OCI-LY7 (cell line): ENCODE measurements at regions of chr15 and their contacts with region 1.

Region 1: DNA sequence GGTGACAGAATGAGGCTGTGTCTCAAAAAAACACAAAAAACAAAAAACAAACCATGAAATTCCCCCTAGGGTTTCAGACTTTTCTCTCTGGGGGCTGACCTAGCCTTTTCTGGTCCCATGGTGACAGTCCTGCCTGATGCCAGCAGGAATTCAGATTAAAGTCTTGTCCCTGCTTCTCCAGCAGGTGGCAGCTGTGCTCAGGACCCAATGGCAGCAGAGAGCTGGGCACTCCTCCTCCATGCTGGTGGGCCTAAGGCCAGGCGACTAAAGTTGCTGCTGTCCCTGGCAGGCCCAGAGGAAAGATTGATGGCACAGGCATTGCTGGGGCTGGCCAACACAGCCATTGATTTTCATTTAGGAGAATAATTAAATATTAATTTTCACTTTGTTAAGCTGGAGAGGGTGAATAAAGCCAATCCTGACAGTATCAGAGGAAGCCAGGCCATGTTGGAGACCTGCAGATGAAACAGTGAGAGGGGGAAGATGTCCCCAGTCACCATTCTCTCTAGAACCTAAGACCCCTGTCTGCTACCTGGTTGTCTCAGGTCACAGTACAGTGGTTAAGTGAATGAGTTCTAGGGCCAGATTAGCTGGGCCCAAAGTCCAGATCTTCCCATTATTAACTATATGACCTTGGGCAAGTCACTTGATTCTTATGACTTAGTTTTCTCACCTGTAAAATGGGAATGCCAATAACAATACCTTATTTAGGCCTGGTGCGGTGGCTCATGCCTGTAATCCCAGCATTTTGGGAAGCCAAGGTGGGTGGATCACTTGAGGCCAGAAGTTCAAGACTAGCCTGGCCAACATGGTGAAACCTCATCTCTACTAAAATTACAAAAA is 7.1 kb downstream of the CELF6 start:
- DNase-seq: peak; percentile 69
- H3K4me3 ChIP-seq: no peak overlapping the region
- H3K27ac ChIP-seq: no peak overlapping the region
- H3K4me1 ChIP-seq: no peaks in the 10 kb centered on the region
- CTCF ChIP-seq: peak; percentile 83

Region 2: DNA sequence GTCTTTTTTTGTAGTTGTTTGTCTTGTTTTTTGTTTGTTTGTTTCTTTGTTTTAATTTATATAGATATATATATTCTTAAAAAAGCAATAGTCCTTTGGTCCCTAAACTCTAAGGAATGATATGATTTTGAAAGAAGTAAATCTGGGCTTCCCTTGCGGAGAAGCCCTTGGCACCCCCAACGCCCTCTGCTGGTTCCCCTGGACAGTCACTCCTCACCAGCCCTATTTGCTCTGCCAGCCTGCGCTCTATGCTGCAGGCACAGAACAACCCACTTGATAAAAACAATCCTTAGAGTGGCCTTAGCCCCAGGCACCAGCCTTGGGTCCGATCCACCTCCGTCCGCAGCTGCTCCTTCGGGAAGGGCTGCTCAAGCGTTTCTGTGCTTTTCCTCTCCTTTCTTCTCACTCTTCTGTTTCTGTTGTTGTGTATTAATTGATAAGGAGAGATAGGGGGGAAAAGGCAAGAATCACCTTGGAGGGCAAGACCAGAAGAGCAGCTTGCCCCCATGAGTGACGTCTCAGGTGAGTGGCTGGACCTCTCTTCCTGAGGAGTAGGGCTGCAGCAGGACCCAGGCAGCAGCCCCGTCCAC is 26.8 kb before region 1 on chr15:
- CTCF ChIA-PET with region 1: no interaction called
- POLR2A ChIA-PET with region 1: no interaction called
- intact Hi-C with region 1: no loop called
- DNase-seq: peak; percentile 57
- H3K4me3 ChIP-seq: no peak overlapping the region
- H3K27ac ChIP-seq: no peak overlapping the region
- H3K4me1 ChIP-seq: no peaks in the 10 kb centered on the region
- CTCF ChIP-seq: peak; percentile 83

Region 3: DNA sequence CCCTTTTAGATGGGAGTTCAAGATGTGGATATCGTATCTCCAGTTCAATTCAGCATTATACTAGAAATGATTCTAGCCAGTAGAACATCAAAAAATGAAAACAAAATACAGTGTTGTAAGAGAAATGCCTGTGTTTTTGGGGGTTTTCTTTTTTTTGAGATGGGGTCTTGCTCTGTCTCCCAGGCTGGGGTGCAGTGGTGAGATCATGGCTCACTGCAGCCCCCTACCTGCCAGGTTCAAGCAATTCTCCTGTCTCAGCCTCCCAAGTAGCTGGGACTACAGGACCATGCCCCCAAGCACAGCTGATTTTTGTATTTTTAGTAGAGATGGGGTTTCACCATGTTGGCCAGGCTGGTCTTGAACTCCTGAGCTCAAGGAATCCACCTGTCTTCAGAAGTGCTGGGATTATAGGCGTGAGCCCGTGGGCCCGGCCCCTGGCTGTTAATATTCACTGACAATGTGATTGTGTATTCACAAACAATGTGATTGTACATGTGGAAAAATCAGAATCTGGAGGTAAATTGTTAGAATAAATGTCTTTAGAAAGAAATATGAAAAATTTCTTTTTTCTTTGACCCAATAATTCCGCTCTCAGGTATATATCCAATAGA is 220.3 kb after region 1 on chr15:
- CTCF ChIA-PET with region 1: no interaction called
- POLR2A ChIA-PET with region 1: interaction called, 6 read pairs
- intact Hi-C with region 1: loop called (anchors 2 kb)
- DNase-seq: peak; percentile 14
- H3K4me3 ChIP-seq: no peak overlapping the region
- H3K27ac ChIP-seq: no peak overlapping the region
- H3K4me1 ChIP-seq: no peaks in the 10 kb centered on the region
- CTCF ChIP-seq: peak; percentile 79

Region 4: GRCh38 chr15:72859017-72859756 is 546.4 kb after region 1 on chr15:
- CTCF ChIA-PET with region 1: no interaction called
- POLR2A ChIA-PET with region 1: no interaction called
- intact Hi-C with region 1: no loop called
- DNase-seq: no peak
- H3K4me3 ChIP-seq: no peak overlapping the region
- H3K27ac ChIP-seq: no peak overlapping the region
- H3K4me1 ChIP-seq: no peaks in the 10 kb centered on the region
- CTCF ChIP-seq: no peak